ENCODE measurements at regions of chr5 and their contacts with region 1.

Region 1: DNA sequence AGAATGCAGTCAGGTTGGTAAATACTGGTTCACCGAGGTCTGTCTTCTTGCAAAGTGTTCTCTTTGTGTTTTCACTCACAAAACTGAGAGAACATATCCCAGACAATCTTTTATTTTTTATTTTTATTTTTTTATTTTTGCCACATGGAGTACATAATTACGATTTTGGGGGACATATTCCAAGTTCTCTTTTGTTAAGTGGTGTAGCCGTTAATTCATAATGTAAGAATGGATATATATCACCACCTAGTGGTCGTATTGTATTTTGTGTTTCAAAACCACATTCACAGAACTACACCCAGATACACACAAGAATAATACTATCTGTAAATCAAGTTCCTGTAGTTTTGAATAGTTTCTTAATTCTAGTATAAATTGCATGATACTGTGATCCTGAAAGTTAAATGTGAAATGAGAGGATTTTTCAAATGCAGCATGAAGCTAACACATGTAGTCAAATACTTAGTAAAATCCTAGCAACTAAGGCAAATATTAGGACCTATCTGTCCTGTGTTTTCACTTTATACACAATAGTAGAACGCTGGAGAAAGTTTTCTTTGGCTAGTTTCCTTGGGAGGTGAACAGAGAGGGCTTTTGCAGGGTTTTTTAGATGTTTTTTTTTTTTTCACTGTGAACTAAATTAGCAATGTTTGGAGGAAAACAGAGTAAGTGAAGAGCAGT is 92.7 kb downstream of the VCAN start:
- DNase-seq: peak in 1 of 2 experiments; percentile 24
- H3K4me3 ChIP-seq: no peak overlapping the region
- H3K4me3 Mint-ChIP-seq: peak overlapping the region; percentile 52
- H3K27ac Mint-ChIP-seq: peak overlapping the region; percentile 50
- H3K4me1 ChIP-seq: peaks cover 26% of the 10 kb centered on the region
- H3K4me1 Mint-ChIP-seq: peaks cover 20% of the 10 kb centered on the region
- H3K27me3 ChIP-seq: no peaks in the 10 kb centered on the region
- H3K27me3 Mint-ChIP-seq: no peaks in the 10 kb centered on the region
- CTCF ChIP-seq: peak; percentile 46 to 69

Region 2: DNA sequence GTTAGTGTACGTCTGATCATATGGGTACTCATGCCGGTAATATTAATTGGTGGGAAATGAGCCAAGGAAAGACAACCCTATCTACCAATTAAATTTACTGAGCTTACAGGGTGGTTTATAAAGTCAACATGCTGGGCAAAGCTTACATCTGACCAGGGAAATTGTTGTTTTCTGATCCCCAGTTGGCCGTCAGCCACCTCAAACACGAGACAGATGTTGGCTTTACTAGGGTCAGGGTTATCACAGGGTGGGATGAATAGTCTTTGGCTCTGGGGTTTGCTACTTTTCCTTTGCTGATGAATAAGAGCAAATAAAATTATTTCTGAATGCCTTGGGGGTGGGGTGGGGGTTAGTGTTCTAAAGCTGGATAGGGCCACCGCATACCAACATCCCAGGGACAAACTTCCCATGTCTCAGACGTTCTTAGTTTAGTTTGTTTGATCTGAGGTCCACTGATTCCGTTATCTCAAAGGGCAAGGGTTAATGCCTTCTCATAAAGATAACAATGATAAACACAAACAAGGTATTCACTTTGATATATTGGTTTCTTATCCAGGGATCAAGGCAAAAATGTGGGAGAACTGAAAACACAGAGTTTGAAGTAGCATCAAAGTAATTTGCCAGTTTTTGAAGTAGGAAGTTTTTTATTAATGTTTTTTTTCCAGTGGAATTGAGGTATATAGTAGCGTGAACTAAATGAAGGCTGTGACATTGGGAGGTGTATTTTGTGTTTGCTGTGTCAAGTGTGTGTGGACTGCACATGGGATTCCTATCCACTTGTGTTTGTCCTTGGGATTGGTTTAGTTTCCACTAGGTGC is 1177.0 kb before region 1 on chr5:
- CTCF ChIA-PET with region 1: no interaction called
- POLR2A ChIA-PET with region 1: no interaction called
- intact Hi-C with region 1: loop called (anchors 1 kb)
- DNase-seq: peak; percentile 85 to 88
- H3K4me3 ChIP-seq: no peak overlapping the region
- H3K4me3 Mint-ChIP-seq: peak overlapping the region; percentile 54
- H3K27ac Mint-ChIP-seq: peak overlapping the region; percentile 73
- H3K4me1 ChIP-seq: peaks cover 23% of the 10 kb centered on the region
- H3K4me1 Mint-ChIP-seq: peaks cover 39% of the 10 kb centered on the region
- H3K27me3 ChIP-seq: no peaks in the 10 kb centered on the region
- H3K27me3 Mint-ChIP-seq: no peaks in the 10 kb centered on the region
- CTCF ChIP-seq: no peak

Region 3: DNA sequence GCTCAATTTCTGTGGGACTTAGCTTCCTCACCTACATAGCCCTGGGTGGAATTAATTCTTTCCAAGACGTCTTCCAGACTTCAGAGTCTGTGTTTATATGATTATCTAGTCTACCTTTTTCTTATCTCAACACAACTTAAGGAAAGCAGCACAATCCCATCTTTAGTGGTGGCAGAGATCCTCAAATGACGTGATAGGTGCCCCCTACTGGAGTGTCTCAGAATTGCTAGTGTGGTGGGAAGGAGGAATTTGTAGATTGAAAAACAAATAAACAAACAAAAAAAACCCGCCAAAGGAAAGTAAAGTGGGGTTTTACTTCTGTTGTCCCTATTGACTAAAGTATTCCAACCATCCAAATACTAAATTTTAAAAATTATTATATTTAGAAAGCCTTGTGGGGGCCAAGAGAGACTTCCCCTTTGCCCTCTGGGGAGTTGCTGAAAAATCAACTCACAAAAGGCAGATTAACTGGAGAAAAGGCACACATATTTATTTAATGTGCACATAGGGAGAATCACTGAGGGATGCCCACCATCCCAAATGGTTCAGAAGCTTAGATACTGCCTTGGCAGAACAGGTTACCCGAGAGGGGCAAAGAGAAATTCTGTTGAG is 770.3 kb before region 1 on chr5:
- CTCF ChIA-PET with region 1: no interaction called
- POLR2A ChIA-PET with region 1: no interaction called
- intact Hi-C with region 1: loop called (anchors 10 kb)
- DNase-seq: peak in 1 of 2 experiments; percentile 47
- H3K4me3 ChIP-seq: no peak overlapping the region
- H3K4me3 Mint-ChIP-seq: no peak overlapping the region
- H3K27ac Mint-ChIP-seq: no peak overlapping the region
- H3K4me1 ChIP-seq: no peaks in the 10 kb centered on the region
- H3K4me1 Mint-ChIP-seq: no peaks in the 10 kb centered on the region
- H3K27me3 ChIP-seq: no peaks in the 10 kb centered on the region
- H3K27me3 Mint-ChIP-seq: no peaks in the 10 kb centered on the region
- CTCF ChIP-seq: peak; percentile 53 to 57

Region 4: DNA sequence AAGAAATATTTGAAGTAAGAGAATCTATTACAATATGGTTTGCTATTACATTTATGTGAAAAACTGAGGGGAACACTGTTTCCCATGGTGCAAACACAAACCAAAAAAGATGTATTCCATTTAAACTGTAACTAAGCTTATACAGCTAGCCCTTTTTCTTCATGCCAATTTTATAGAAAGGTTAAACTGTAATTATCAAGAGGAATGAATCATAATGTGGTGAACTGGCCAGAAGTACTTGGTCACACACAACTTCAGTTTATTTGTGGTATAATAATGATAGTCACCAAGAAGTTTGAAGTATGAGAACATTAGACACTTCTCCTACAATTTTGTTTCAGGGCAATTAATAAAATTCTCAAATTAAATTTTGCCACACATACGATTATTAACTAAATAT is 308.9 kb before region 1 on chr5:
- CTCF ChIA-PET with region 1: no interaction called
- POLR2A ChIA-PET with region 1: no interaction called
- intact Hi-C with region 1: loop called (anchors 10 kb)
- DNase-seq: no peak
- H3K4me3 ChIP-seq: no peak overlapping the region
- H3K4me3 Mint-ChIP-seq: no peak overlapping the region
- H3K27ac Mint-ChIP-seq: no peak overlapping the region
- H3K4me1 ChIP-seq: peaks cover 7% of the 10 kb centered on the region; the same call in 1 of the 2 replicates
- H3K4me1 Mint-ChIP-seq: peaks cover 5% of the 10 kb centered on the region
- H3K27me3 ChIP-seq: no peaks in the 10 kb centered on the region
- H3K27me3 Mint-ChIP-seq: no peaks in the 10 kb centered on the region
- CTCF ChIP-seq: no peak

Region 5: DNA sequence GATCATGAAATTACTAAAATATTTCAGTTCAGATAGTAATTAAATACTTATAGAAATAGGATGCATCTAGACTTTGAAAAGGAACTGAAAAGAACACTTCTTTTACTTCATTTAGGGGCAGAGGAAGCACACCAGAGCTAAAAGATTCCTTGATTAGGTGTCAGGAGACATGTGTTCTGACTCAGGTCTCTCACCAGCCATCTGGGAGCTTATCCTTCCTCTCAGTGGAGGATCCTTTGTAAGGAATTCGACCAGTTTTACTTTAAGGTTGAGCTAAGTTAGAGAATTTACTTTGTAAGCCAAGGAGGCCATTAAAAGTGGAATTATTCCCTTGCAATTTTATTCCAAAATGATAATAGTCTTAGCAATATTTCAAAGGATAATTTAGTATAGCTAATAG is 75.9 kb before region 1 on chr5:
- CTCF ChIA-PET with region 1: no interaction called
- POLR2A ChIA-PET with region 1: no interaction called
- intact Hi-C with region 1: no loop called
- DNase-seq: no peak
- H3K4me3 ChIP-seq: no peak overlapping the region
- H3K4me3 Mint-ChIP-seq: no peak overlapping the region
- H3K27ac Mint-ChIP-seq: no peak overlapping the region
- H3K4me1 ChIP-seq: no peaks in the 10 kb centered on the region
- H3K4me1 Mint-ChIP-seq: no peaks in the 10 kb centered on the region
- H3K27me3 ChIP-seq: no peaks in the 10 kb centered on the region
- H3K27me3 Mint-ChIP-seq: no peaks in the 10 kb centered on the region
- CTCF ChIP-seq: no peak

Region 6: GRCh38 chr5:83528439-83528769 is 35.8 kb before region 1 on chr5:
- CTCF ChIA-PET with region 1: no interaction called
- POLR2A ChIA-PET with region 1: no interaction called
- intact Hi-C with region 1: loop called (anchors 5 kb)
- DNase-seq: no peak
- H3K4me3 ChIP-seq: no peak overlapping the region
- H3K4me3 Mint-ChIP-seq: no peak overlapping the region
- H3K27ac Mint-ChIP-seq: no peak overlapping the region
- H3K4me1 ChIP-seq: no peaks in the 10 kb centered on the region
- H3K4me1 Mint-ChIP-seq: no peaks in the 10 kb centered on the region
- H3K27me3 ChIP-seq: no peaks in the 10 kb centered on the region
- H3K27me3 Mint-ChIP-seq: peaks cover 7% of the 10 kb centered on the region
- CTCF ChIP-seq: no peak

Region 7: GRCh38 chr5:83837265-83837907 is 273.2 kb after region 1 on chr5:
- CTCF ChIA-PET with region 1: no interaction called
- POLR2A ChIA-PET with region 1: no interaction called
- intact Hi-C with region 1: no loop called
- DNase-seq: no peak
- H3K4me3 ChIP-seq: no peak overlapping the region
- H3K4me3 Mint-ChIP-seq: no peak overlapping the region
- H3K27ac Mint-ChIP-seq: no peak overlapping the region
- H3K4me1 ChIP-seq: no peaks in the 10 kb centered on the region
- H3K4me1 Mint-ChIP-seq: no peaks in the 10 kb centered on the region
- H3K27me3 ChIP-seq: no peaks in the 10 kb centered on the region
- H3K27me3 Mint-ChIP-seq: no peaks in the 10 kb centered on the region
- CTCF ChIP-seq: no peak

Region 8: DNA sequence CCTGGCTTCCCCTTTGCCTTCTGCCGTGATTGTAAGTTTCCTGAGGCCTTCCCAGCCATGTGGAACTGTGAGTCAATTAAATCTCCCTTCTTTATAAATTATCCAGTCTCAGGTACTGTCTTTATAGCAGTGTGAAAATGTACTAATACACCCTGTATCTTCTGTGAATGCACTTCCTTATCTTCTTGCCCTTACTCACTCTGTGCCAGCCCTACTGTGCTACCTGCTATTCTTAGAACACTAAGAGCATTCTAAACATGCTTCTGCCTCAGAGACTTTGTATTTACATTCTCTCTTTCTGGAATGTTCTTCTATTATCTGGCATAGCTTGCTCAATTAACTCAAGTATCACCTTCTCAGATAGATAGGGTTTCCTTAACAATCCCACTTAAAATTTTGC is 984.8 kb after region 1 on chr5:
- CTCF ChIA-PET with region 1: no interaction called
- POLR2A ChIA-PET with region 1: no interaction called
- intact Hi-C with region 1: no loop called
- DNase-seq: no peak
- H3K4me3 ChIP-seq: no peak overlapping the region
- H3K4me3 Mint-ChIP-seq: no peak overlapping the region
- H3K27ac Mint-ChIP-seq: no peak overlapping the region
- H3K4me1 ChIP-seq: no peaks in the 10 kb centered on the region
- H3K4me1 Mint-ChIP-seq: no peaks in the 10 kb centered on the region
- H3K27me3 ChIP-seq: no peaks in the 10 kb centered on the region
- H3K27me3 Mint-ChIP-seq: no peaks in the 10 kb centered on the region
- CTCF ChIP-seq: no peak